Posterior cingulate gyrus (tissue), 11 donors: ENCODE measurements at regions of chr16 and their contacts with region 1.

Region 1: GRCh38 chr16:48164907-48165726 is 9.3 kb upstream of the ABCC12 start:
- DNase-seq: peak; percentile 65 to 96 (median 86)

Region 2: GRCh38 chr16:46947900-46948547 is 1217.1 kb before region 1 on chr16:
- intact Hi-C with region 1: loop called (anchors 5 kb)
- DNase-seq: no peak

Region 3: DNA sequence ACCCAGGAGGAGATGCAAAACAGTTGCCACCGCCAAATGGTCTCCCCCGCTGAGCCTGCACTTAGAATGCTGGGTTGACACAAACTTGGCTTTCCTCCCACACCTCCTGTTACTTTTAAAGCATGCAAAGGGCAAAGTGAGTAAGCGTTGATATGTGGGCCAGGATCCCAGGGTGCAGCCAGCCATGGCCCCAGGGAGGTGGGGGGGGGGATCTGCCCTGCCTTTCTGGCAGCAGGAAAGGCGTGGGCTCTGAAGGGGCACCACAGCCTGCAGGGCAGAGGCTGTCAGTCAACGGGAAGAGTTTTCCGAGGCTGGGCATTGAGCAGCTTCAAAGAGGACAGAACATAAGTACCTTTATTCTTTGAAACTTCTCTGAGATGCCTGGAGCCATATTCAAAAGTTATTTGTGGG is 151.6 kb before region 1 on chr16:
- intact Hi-C with region 1: no loop called
- DNase-seq: no peak

Region 4: DNA sequence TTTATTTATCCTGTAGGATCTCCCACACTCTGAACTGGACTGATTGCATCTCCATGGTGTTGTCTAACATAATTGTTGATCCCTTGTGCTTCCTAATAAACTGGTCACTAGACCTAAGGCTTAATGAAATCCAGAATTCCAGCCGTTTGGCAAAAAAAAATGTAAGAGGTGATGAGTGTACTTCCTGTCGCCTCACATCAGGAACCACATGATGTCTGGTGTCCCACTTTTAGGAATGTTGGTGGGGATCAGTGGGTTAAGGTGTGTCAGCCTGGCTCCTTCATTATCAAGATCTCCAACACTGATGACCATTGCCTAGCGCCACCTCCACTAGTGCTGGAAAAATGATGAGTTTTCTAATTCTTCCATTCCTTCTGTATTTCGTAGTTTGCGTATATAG is 60.3 kb after region 1 on chr16:
- intact Hi-C with region 1: no loop called
- DNase-seq: no peak

Region 5: GRCh38 chr16:48385272-48386150 is 220.4 kb after region 1 on chr16 and contains the start of gene SIAH1:
- intact Hi-C with region 1: no loop called
- DNase-seq: peak; percentile 76 to 98 (median 80)